Motor neuron (in vitro differentiated cells): ENCODE measurements at regions of chr11 and their contacts with region 1.

Region 1: DNA sequence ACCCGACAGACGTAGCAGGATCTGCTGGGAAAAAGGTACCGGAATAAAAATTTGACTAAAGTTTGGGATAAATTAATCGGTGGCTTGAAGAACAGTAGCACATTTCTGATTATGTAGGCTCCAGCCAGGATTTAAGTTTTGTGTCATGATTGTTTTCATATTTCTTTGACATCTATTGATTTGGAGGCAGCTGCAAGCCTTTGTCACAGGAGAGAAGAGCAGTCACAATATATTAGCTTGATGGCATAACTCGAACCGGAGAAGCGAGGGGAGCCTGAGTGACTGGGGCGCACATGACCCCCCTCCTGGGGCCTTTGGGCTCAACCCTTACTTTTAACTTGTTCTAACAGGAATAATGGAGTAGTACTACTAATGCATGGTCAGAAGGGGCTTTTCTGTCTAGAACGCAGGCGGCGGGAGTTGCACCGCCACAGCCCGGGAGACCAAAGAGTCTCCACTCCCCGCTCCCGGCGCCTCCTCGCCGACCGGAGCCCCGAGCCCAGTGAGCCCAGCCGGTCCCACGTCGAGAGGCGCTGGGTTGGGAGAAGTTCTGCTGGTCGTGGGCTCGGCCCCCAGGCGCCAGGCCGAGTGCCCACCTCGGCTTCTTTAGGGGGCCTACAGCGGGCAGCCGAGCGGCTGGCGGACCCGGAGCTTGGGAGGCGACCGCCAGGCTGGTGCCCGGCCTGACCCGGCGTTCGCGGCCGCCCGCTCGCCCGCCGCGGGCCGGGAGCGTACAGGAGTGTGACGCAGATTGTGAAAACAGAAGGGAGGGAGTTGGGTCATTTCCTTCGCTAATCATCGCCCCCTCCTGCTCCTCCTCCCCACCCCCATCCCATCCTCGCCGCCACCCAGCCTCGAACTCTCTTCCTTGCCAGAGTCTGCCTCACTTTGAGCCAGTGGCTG is 15.7 kb upstream of the PAX6 start:
- ATAC-seq: peak in 7 of 8 experiments; percentile 37 to 62 (median 56)
- H3K4me3 ChIP-seq: peak overlapping the region in 4 of 5 donors; percentile 10 to 24 (median 20)
- H3K27ac ChIP-seq: no peak overlapping the region
- H3K4me1 ChIP-seq: peaks cover 37 to 46% of the 10 kb centered on the region in 2 donors

Region 2: DNA sequence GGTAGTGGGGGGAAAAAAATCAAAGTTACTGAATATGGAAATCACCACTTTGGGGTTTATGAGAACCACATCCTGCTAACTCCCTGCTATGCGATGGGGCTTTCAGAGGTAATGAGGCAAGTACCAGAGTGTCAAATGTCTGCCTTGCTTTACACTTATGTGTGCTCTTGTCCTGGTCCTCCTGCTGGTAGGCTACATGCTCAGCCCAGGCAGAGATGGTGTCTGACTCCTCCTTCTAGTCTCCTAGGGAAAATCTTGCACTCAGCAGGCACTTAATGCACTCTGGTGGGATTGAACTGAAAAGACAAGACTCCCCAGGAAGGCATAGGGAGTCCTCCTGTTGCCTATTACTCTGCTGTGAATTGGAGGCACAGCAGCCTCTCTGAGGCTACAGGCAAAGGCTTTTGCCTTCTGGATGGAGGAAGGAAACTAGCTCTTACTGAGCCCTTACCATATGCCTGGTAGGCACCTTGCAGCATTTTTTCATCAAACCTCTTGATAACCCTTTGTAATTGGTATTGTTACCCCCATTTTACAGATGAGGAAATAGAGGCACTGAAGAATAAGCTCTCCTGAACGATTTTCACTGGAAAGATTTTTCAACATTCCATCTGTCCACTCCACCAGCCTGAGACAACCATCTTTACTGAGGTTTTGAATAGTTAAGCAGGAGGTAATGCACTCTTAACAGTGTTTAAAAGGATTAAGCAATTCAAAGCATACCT is 116.4 kb after region 1 on chr11:
- in situ Hi-C with region 1: loop called in 1 of 9 experiments (anchors 25 kb)
- ATAC-seq: no peak
- H3K4me3 ChIP-seq: no peak overlapping the region
- H3K27ac ChIP-seq: no peak overlapping the region
- H3K4me1 ChIP-seq: no peaks in the 10 kb centered on the region